Naive thymus-derived CD4-positive, alpha-beta T cell (primary cell): ENCODE measurements at regions of chr7 and their contacts with region 1.

Region 1: GRCh38 chr7:75994388-75995051 is at the start of gene TMEM120A:
- DNase-seq: peak; percentile 87 to 98 (median 92)
- ATAC-seq: peak; percentile 99
- H3K4me3 ChIP-seq: peak within 1 kb of the TSS; percentile 84
- H3K4me3 Mint-ChIP-seq: peak within 1 kb of the TSS; percentile 62 to 82 (median 76)
- H3K27ac ChIP-seq: peak within 1 kb of the TSS; percentile 80
- H3K27ac Mint-ChIP-seq: peak within 1 kb of the TSS in 5 of 9 donors; percentile 48 to 65 (median 55)
- H3K4me1 ChIP-seq: peaks cover 6 to 10% of the 10 kb centered on the region in 2 donors
- H3K4me1 Mint-ChIP-seq: peaks cover 12 to 37% (median 34%) of the 10 kb centered on the region in 7 donors
- H3K27me3 ChIP-seq: no peaks in the 10 kb centered on the region
- H3K27me3 Mint-ChIP-seq: no peaks in the 10 kb centered on the region
- total RNA-seq, gene TMEM120A: 19.1 to 38.6 (median 35.6) TPM

Region 2: GRCh38 chr7:75772081-75773077 is 222.1 kb before region 1 on chr7 and contains the start of gene CCL26:
- CTCF ChIA-PET with region 1: no interaction called
- POLR2A ChIA-PET with region 1: no interaction called
- intact Hi-C with region 1: no loop called
- DNase-seq: no peak
- ATAC-seq: no peak
- H3K4me3 ChIP-seq: no peak within 1 kb of the TSS
- H3K4me3 Mint-ChIP-seq: no peak within 1 kb of the TSS
- H3K27ac ChIP-seq: no peak within 1 kb of the TSS
- H3K27ac Mint-ChIP-seq: peak within 1 kb of the TSS in 1 of 9 donors; percentile 43
- H3K4me1 ChIP-seq: peaks cover 5 to 16% of the 10 kb centered on the region in 2 donors
- H3K4me1 Mint-ChIP-seq: peaks cover 0 to 15% (median 7%) of the 10 kb centered on the region in 7 donors
- H3K27me3 ChIP-seq: no peaks in the 10 kb centered on the region
- H3K27me3 Mint-ChIP-seq: no peaks in the 10 kb centered on the region
- total RNA-seq, gene CCL26: not detected

Region 3: GRCh38 chr7:76008156-76008687 is 13.7 kb after region 1 on chr7:
- CTCF ChIA-PET with region 1: no interaction called
- POLR2A ChIA-PET with region 1: interaction called, 3 read pairs
- intact Hi-C with region 1: loop called (anchors 1 kb)
- DNase-seq: peak in 1 of 9 donors; percentile 38
- ATAC-seq: no peak
- H3K4me3 ChIP-seq: no peak overlapping the region
- H3K4me3 Mint-ChIP-seq: peak overlapping the region in 8 of 10 donors; percentile 1 to 85 (median 65)
- H3K27ac ChIP-seq: no peak overlapping the region
- H3K27ac Mint-ChIP-seq: peak overlapping the region in 6 of 9 donors; percentile 6 to 91 (median 58)
- H3K4me1 ChIP-seq: peaks cover 15 to 25% of the 10 kb centered on the region in 2 donors
- H3K4me1 Mint-ChIP-seq: peaks cover 22 to 37% (median 29%) of the 10 kb centered on the region in 7 donors
- H3K27me3 ChIP-seq: no peaks in the 10 kb centered on the region
- H3K27me3 Mint-ChIP-seq: peaks cover 0 to 2% (median 0%) of the 10 kb centered on the region in 5 donors

Region 4: DNA sequence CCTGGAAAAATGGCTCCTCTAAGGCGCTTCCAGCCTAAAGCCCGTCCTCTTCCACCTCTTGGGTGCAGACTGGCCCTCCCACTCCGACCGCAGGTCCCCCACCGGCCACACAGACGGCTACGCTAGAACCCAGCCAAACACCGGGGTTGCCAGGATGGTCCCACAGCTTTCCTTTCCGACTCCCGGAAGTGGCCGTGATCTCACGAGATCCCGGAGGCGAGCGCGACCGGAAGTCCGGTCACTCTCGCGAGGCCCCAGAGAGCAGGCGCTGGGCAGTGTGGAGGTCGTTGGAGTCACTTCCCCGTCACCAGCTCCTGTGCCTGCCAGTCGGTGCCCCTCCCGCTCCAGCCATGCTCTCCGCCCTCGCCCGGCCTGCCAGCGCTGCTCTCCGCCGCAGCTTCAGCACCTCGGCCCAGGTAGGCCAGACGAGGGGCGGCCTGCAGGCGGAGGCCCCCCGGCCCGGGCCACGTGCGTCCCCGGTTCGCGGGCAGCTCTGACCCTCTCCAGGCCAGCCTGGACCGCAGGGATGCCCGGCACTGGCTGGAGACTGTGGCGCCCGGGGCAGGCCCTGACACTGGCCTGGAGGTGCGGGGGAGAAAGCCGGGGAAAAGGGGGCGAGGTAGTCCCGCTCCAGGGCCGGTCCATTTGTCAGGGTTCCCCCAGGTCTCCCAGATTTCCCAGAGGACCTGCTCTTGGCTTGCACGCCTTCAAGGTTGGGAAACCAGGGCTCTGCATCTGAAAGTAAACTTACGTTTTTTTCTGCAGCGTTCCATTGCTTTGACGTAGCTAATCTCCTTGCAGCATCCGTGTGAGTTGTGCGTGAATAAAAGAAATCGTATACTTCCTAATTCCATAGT is 53.5 kb after region 1 on chr7 and contains the starts of genes MDH2 and STYXL1:
- CTCF ChIA-PET with region 1: no interaction called
- POLR2A ChIA-PET with region 1: interaction called, 7 read pairs
- intact Hi-C with region 1: loop called (anchors 1 kb)
- DNase-seq: peak; percentile 68 to 89 (median 76)
- ATAC-seq: peak; percentile 92
- H3K4me3 ChIP-seq: peak within 1 kb of the TSS; percentile 95
- H3K4me3 Mint-ChIP-seq: peak within 1 kb of the TSS; percentile 90 to 99 (median 97)
- H3K27ac ChIP-seq: peak within 1 kb of the TSS; percentile 80
- H3K27ac Mint-ChIP-seq: peak within 1 kb of the TSS; percentile 92 to 98 (median 97)
- H3K4me1 ChIP-seq: peaks cover 7 to 17% of the 10 kb centered on the region in 2 donors
- H3K4me1 Mint-ChIP-seq: peaks cover 36 to 70% (median 53%) of the 10 kb centered on the region in 7 donors
- H3K27me3 ChIP-seq: no peaks in the 10 kb centered on the region
- H3K27me3 Mint-ChIP-seq: no peaks in the 10 kb centered on the region
- total RNA-seq, gene MDH2: 71.7 to 172 (median 74.6) TPM
- total RNA-seq, gene STYXL1: 11.3 to 31.7 (median 20.0) TPM